ENCODE measurements at regions of chr6 and their contacts with region 1.

Region 1: GRCh38 chr6:31680840-31681671 is at the start of gene LY6G5C:
- DNase-seq: peak; percentile 93
- total RNA-seq, gene LY6G5C: 2.9 TPM

Region 2: DNA sequence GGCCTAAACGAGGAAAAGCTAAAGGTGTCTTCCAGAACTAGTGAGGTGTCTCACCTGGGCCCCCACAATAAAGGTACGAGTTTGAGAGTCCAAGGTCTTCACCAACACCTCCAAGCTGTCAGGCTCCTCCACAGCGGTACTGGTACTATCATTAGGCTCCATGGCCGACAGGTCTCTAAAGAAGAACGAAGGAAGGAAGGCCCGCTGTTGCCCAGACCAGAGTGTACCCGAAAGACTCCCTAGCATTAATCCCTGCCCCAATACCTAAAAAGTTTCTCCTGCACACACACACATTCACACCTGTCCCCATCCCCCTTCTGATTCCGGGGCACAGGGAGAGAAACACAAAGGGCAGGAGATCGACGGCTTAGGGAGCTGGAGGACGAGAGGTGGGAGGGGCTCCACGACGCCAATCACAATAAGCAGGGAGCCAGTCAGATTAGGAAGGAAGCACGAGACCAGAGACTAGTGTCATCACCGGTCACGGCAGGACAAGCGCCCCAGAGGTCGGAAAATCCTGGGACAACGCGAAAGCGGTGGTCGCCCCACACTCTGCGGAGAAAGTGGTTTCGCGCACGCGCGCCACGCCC is 29.4 kb before region 1 on chr6:
- intact Hi-C with region 1: no loop called
- DNase-seq: peak; percentile 90

Region 3: DNA sequence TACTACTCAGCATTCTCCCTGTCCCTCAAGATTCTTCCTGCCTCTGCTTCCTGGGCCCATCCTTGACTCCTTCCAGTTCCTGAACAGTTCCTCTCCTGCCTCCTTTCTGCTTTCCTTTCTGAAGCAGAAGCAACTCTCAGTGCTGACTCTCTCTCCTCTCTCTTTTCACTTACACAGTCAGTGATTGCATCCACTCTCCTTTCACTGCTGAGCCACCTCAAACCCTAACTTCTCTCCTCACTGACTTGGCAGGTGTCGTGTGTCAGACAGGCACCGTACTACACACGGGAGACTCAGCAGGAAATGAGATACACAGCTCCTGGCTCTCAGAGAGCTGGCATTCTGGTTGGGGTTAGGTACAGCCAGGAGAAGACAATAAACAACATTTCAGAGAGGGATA is 16.5 kb after region 1 on chr6:
- intact Hi-C with region 1: no loop called
- DNase-seq: no peak

Region 4: GRCh38 chr6:31729515-31729978 is 48.5 kb after region 1 on chr6:
- intact Hi-C with region 1: no loop called
- DNase-seq: peak; percentile 96

Region 5: GRCh38 chr6:31763619-31763940 is 82.5 kb after region 1 on chr6:
- intact Hi-C with region 1: loop called (anchors 2 kb)
- DNase-seq: no peak

Region 6: GRCh38 chr6:31834434-31835198 is 153.6 kb after region 1 on chr6:
- intact Hi-C with region 1: loop called (anchors 2 kb)
- DNase-seq: peak; percentile 93

Region 7: GRCh38 chr6:31862344-31863227 is 181.5 kb after region 1 on chr6 and contains the start of gene NEU1:
- intact Hi-C with region 1: loop called (anchors 10 kb)
- DNase-seq: peak; percentile 100
- total RNA-seq, gene NEU1: 19.4 TPM

Region 8: DNA sequence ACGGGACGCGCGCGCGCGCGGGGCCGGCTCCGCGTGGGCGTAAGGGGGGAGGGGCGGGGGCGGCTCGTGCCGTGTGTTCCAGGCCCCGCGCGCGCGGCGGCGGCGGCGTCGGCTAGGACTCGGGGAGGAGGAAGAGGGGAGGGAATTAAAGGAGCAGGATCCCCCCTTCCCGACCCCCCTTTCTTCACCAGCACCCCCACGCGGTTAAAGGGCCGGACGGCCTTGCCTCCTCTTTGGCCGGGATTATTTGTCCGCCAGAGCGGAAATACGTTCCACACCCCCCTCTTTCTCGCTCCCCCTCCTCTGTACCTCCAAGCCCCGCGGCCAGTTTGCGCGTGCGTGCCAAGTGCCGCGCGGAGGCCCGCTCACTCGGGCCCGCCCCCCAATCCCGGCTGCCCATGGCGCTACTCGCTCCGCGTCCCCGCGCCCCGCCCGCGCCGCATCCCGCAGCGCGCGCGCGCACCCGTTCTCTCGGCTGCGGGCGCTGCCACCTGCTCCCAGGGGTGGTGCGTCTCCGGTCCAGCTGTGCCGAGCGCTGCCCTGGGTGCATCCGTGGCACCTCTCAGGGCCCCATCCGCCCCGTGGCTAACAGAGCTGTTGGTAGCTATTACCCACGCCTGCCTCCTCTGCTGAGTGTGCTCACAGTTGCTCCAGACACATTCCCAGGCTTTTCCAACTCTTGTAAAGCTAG is 221.0 kb after region 1 on chr6 and contains the start of gene ZBTB12:
- intact Hi-C with region 1: loop called (anchors 5 kb)
- DNase-seq: peak; percentile 94
- total RNA-seq, gene ZBTB12: 5.2 TPM

Region 9: GRCh38 chr6:31952140-31952805 is 271.2 kb after region 1 on chr6:
- intact Hi-C with region 1: loop called (anchors 5 kb)
- DNase-seq: no peak